Testis (tissue), 5 donors: ENCODE measurements at regions of chr9 and their contacts with region 1.

Region 1: DNA sequence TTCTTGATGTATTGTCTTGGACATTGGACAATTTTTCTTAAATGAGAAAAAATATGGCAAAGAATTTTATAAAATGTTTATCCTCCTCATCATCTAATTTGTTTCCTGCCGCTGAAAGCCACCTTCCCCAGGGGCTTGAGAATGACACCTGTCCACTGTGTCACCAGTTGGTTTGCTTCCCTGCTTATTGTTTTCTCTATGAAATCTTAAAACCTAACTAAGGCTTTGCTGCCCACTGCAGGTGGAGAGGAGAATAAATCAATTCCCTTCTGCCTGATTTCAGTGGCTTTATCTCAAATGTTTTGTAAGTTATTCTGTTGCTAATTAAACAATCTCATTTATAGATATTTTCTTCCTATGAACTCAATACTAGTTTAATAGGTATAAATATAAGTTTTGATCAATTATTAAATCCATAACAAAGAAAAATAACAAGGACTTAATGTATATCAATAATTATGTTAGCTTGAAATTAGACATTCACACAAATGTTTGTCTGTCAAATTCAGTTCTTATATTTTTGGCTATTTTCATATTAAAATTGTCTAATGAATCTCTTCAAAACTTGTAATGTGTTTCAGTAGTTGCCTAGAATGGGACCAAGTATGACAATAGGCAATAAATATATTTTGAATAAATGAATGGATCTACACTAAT is 822.5 kb downstream of the PTPRD start:
- DNase-seq: peak; percentile 46
- H3K4me3 ChIP-seq: no peak overlapping the region
- H3K27ac ChIP-seq: no peak overlapping the region
- H3K4me1 ChIP-seq: no peaks in the 10 kb centered on the region
- H3K27me3 ChIP-seq: no peaks in the 10 kb centered on the region
- CTCF ChIP-seq: peak; percentile 65 to 76 (median 70)
- POLR2A ChIP-seq: no peak

Region 2: DNA sequence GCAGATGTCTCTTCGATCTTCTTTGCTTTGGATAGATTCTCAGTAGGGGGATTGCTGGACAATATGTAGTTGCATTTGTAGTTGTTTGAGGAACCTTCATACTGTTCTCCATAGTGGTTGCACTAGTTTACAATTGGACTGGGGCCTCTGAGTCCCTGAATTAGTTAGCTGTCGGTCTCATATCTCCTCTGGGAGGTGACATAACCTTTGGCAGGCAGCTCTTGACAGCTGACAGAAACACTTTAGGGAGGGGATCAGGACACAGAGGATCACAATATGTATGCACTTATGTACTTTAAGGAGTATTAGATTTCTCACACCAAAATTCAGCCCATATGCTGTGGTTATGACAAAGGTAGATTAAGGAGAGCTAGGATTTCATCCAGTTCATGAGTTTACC is 710.9 kb before region 1 on chr9:
- intact Hi-C with region 1: no loop called
- DNase-seq: no peak
- H3K4me3 ChIP-seq: no peak overlapping the region
- H3K27ac ChIP-seq: no peak overlapping the region
- H3K4me1 ChIP-seq: no peaks in the 10 kb centered on the region
- H3K27me3 ChIP-seq: no peaks in the 10 kb centered on the region
- CTCF ChIP-seq: no peak
- POLR2A ChIP-seq: no peak

Region 3: GRCh38 chr9:9399982-9400381 is 390.4 kb before region 1 on chr9:
- intact Hi-C with region 1: no loop called
- DNase-seq: no peak
- H3K4me3 ChIP-seq: no peak overlapping the region
- H3K27ac ChIP-seq: no peak overlapping the region
- H3K4me1 ChIP-seq: peaks cover 4% of the 10 kb centered on the region
- H3K27me3 ChIP-seq: no peaks in the 10 kb centered on the region
- CTCF ChIP-seq: no peak
- POLR2A ChIP-seq: no peak

Region 4: DNA sequence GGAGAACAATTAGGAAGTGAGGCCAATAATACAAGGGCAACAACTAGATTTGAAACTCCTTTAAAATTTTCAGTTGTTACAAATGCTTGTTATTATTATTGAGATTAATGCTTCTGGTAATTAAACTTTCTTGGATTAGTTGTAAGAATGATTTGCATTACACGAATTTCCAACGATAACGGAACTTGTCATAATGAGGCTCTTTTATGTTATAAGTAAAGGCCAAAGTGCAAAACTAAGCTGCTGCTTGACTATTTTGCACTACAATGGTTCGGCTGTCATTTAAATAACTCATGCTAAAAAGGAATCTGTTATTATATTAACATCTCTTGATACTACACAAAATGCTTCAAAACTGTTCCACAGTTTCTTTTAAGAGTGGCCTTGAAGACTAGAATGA is 184.7 kb before region 1 on chr9:
- intact Hi-C with region 1: loop called (anchors 5 kb)
- DNase-seq: no peak
- H3K4me3 ChIP-seq: no peak overlapping the region
- H3K27ac ChIP-seq: no peak overlapping the region
- H3K4me1 ChIP-seq: no peaks in the 10 kb centered on the region
- H3K27me3 ChIP-seq: no peaks in the 10 kb centered on the region
- CTCF ChIP-seq: no peak
- POLR2A ChIP-seq: no peak